CD14-positive monocyte (primary cell): ENCODE measurements at regions of chr12 and their contacts with region 1.

Region 1: DNA sequence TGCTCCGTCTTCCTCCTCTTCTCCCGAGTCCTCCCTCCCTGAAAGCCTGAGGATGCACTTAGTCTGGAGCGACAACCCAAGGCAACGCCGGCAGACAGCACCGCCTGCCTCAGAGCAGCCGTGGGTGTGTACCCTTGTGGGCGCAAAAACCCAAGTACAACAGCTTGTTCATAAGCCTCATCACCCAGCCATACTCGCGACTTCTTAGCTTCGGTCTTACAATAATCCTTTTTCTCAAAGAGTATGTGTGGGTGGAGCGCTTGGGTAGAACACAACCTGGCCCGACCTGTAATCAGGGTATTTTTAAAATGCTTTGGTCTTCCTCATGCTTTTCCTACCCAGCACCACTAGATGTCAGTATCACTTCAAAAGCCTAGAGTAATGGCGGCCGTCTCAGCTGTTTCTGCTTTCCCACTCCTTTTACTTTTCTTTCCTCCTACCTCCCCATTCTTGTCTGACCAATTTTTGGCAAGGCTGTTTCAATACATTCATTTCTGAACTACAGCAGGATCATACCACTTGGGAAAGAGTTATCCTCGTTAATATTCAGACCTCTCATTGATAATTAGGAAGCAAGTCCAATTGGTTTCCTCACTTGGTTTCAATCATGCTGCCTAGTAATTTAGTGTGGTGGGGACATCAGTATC is 198.9 kb downstream of the EPS8 start:
- DNase-seq: peak; percentile 40 to 64 (median 61)
- H3K4me3 ChIP-seq: peak overlapping the region in 1 of 3 experiments; percentile 56
- H3K4me3 Mint-ChIP-seq: peak overlapping the region; percentile 60 to 82
- H3K27ac ChIP-seq: no peak overlapping the region
- H3K27ac Mint-ChIP-seq: peak overlapping the region in 5 of 7 donors; percentile 38 to 84 (median 63)
- H3K4me1 ChIP-seq: peaks cover 0 to 2% of the 10 kb centered on the region in 2 donors
- H3K4me1 Mint-ChIP-seq: peaks cover 9% of the 10 kb centered on the region
- H3K27me3 ChIP-seq: no peaks in the 10 kb centered on the region
- H3K27me3 Mint-ChIP-seq: peaks cover 0 to 6% (median 0%) of the 10 kb centered on the region in 3 donors
- CTCF ChIP-seq: peak; percentile 89

Region 2: DNA sequence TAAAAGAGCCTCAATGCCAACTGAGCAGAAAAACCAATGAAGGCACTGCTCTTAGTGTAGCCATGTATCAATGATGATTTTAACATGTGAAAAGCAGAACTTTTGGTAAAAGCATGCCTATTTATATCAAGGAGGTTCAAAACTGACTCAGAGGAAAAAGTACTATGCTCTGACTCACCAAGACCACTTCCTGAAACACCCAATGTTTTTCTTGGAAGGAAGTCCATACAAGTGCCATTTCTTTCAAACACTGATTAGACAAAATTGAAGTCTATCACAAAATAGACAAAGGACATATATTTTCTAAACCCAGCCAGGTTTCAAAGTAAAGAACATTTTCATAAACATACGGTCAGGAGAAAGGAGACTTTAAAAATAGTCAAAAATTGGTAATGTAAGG is 110.3 kb after region 1 on chr12:
- intact Hi-C with region 1: no loop called
- DNase-seq: peak; percentile 81 to 95 (median 94)
- H3K4me3 ChIP-seq: peak overlapping the region in 1 of 3 experiments; percentile 8
- H3K4me3 Mint-ChIP-seq: peak overlapping the region in 1 of 2 donors; percentile 32
- H3K27ac ChIP-seq: peak overlapping the region in 1 of 2 donors; percentile 83
- H3K27ac Mint-ChIP-seq: peak overlapping the region; percentile 79 to 95 (median 91)
- H3K4me1 ChIP-seq: peaks cover 50 to 58% of the 10 kb centered on the region in 2 donors
- H3K4me1 Mint-ChIP-seq: peaks cover 53% of the 10 kb centered on the region
- H3K27me3 ChIP-seq: no peaks in the 10 kb centered on the region
- H3K27me3 Mint-ChIP-seq: peaks cover 0 to 3% (median 0%) of the 10 kb centered on the region in 3 donors
- CTCF ChIP-seq: no peak

Region 3: DNA sequence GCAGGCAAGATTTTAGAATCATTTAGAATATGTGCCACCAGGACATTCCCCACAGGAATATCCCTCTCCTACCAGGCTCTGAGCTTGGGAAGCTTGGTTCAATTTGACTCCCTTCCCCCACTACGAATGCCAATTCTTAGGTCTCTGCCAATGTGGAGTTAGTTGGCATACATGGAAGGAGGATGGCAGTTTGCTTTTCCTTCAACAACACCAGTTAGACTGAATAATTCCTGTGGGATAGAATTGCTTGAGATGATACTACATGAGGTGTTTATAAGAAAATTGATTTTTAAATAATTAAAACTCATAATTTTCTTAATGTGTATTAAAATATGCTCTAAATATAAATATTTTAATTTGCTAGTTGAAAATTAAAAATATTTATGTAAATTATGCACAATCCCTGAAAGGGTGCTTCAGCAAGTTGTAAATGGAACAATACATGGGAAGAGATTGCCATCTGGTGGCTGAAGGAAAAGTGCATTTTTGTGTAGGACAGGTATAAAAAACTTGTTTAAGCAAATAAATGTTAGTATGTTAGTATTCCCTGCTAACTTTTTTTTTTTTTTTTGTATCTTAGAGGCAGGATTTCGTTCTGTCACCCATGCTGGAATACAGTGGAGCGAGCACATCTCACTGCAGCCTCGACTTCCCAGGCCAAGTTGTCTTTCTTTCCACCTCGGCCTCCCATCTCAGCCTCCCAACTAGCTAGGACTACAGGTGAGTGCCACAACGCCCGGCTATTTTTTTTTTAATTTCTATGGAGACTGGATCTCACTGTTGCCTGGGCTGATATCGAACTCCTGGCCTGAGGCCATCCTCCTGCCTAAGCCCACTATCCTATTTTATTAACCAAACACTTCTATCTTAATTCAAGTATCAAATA is 266.0 kb after region 1 on chr12:
- intact Hi-C with region 1: loop called (anchors 2 kb)
- DNase-seq: peak; percentile 41 to 60 (median 57)
- H3K4me3 ChIP-seq: no peak overlapping the region
- H3K4me3 Mint-ChIP-seq: no peak overlapping the region
- H3K27ac ChIP-seq: no peak overlapping the region
- H3K27ac Mint-ChIP-seq: no peak overlapping the region
- H3K4me1 ChIP-seq: no peaks in the 10 kb centered on the region
- H3K4me1 Mint-ChIP-seq: peaks cover 3% of the 10 kb centered on the region
- H3K27me3 ChIP-seq: no peaks in the 10 kb centered on the region
- H3K27me3 Mint-ChIP-seq: peaks cover 0 to 2% (median 0%) of the 10 kb centered on the region in 3 donors
- CTCF ChIP-seq: peak; percentile 91